B cell (primary cell): ENCODE measurements at regions of chr19 and their contacts with region 1.

Region 1: DNA sequence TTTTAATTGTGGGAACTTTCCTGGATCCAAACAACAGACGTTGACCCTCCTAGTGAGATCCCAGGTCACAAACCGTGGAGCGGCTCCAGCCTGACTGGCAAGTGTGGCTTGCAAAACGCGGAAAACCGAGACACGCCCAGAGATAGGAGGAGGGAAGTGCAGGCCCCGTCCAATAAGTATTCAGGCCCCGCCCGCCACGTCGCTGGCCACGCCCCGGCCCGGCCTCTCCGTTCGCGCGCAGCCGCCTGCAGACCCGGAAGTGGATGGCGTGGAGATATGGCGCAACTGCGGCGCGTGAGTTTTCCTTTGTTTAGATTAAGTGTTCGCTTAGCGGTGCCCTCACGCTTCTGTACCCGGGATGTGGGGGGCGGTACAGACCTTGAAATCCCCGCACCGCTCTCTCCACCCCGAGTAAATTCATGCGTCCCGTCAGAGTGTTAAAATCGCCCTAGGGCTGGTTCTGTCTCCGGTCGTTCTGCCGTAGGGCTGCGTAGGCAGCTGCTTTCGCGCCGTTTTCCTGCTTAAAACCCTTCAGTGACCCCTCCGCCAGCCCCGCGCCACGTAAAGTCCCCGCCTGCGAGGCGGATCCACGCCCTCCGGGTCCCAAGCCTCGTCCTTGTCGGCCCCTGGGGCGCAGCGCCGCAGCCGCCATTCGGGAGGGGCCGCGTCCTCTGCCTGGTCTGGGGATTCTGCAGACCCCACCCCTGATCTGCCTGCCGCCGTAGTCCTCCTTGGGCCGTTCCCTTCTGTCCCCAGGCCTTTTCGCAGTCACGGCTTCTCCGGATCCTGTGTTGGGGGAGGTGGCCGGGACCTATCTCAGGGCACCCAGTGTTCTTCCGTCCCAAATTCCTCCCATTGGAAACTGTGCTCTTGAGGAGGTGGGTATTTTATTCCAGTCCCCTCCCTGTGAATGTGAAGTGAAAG is at the start of gene ZNF766:
- DNase-seq: peak; percentile 96
- ATAC-seq: peak; percentile 99
- H3K4me3 ChIP-seq: peak within 1 kb of the TSS; percentile 83 to 100 (median 96)
- H3K4me3 Mint-ChIP-seq: peak within 1 kb of the TSS; percentile 95
- H3K27ac ChIP-seq: peak within 1 kb of the TSS; percentile 87 to 97
- H3K27ac Mint-ChIP-seq: peak within 1 kb of the TSS; percentile 96
- H3K4me1 ChIP-seq: peaks cover 12 to 21% of the 10 kb centered on the region in 2 donors
- H3K4me1 Mint-ChIP-seq: peaks cover 40% of the 10 kb centered on the region
- H3K27me3 ChIP-seq: no peaks in the 10 kb centered on the region
- H3K27me3 Mint-ChIP-seq: no peaks in the 10 kb centered on the region
- CTCF ChIP-seq: no peak
- total RNA-seq, gene ZNF766: 41.1 and 48.3 TPM in 2 replicates

Region 2: GRCh38 chr19:52171321-52172169 is 98.1 kb before region 1 on chr19 and contains the start of gene ZNF836:
- CTCF ChIA-PET with region 1: no interaction called
- POLR2A ChIA-PET with region 1: no interaction called
- intact Hi-C with region 1: loop called (anchors 1 kb)
- DNase-seq: peak; percentile 92
- ATAC-seq: peak; percentile 98
- H3K4me3 ChIP-seq: peak within 1 kb of the TSS; percentile 71 to 100 (median 82)
- H3K4me3 Mint-ChIP-seq: peak within 1 kb of the TSS; percentile 98
- H3K27ac ChIP-seq: peak within 1 kb of the TSS; percentile 66 to 90
- H3K27ac Mint-ChIP-seq: peak within 1 kb of the TSS; percentile 97
- H3K4me1 ChIP-seq: peaks cover 17 to 20% of the 10 kb centered on the region in 2 donors
- H3K4me1 Mint-ChIP-seq: peaks cover 35% of the 10 kb centered on the region
- H3K27me3 ChIP-seq: no peaks in the 10 kb centered on the region
- H3K27me3 Mint-ChIP-seq: no peaks in the 10 kb centered on the region
- CTCF ChIP-seq: no peak
- total RNA-seq, gene ZNF836: 42.0 and 46.4 TPM in 2 replicates

Region 3: GRCh38 chr19:52296773-52297600 is 27.4 kb after region 1 on chr19 and contains the start of gene ZNF480:
- CTCF ChIA-PET with region 1: no interaction called
- POLR2A ChIA-PET with region 1: no interaction called
- intact Hi-C with region 1: loop called (anchors 1 kb)
- DNase-seq: peak; percentile 91
- ATAC-seq: peak; percentile 77
- H3K4me3 ChIP-seq: peak within 1 kb of the TSS; percentile 93 to 98 (median 98)
- H3K4me3 Mint-ChIP-seq: peak within 1 kb of the TSS; percentile 96
- H3K27ac ChIP-seq: peak within 1 kb of the TSS; percentile 94 to 96
- H3K27ac Mint-ChIP-seq: peak within 1 kb of the TSS; percentile 98
- H3K4me1 ChIP-seq: peaks cover 11 to 16% of the 10 kb centered on the region in 2 donors
- H3K4me1 Mint-ChIP-seq: peaks cover 21% of the 10 kb centered on the region
- H3K27me3 ChIP-seq: no peaks in the 10 kb centered on the region
- H3K27me3 Mint-ChIP-seq: no peaks in the 10 kb centered on the region
- CTCF ChIP-seq: no peak
- total RNA-seq, gene ZNF480: 21.8 and 24.8 TPM in 2 replicates

Region 4: DNA sequence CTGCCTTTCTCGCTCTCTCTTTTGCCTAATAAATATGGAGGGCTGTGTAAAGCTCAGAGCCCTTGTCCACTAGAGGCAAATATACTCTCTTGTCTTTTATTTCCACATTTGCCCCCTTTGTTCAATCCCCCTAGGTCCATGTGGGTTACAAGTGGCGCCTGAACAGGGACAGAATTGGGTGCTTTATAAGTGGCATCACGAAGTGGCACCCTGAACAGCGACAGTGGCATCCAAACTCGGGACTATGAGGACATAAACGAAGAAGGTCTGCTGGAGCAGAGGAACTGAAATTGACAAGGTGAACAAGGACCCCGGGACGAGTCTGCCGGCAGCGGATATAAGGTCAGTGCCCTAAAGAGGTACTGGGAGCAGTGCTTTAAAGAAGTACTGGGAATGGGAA is 62.2 kb after region 1 on chr19:
- CTCF ChIA-PET with region 1: no interaction called
- POLR2A ChIA-PET with region 1: no interaction called
- intact Hi-C with region 1: no loop called
- DNase-seq: peak; percentile 23
- ATAC-seq: no peak
- H3K4me3 ChIP-seq: no peak overlapping the region
- H3K4me3 Mint-ChIP-seq: no peak overlapping the region
- H3K27ac ChIP-seq: no peak overlapping the region
- H3K27ac Mint-ChIP-seq: no peak overlapping the region
- H3K4me1 ChIP-seq: peaks cover 1 to 10% of the 10 kb centered on the region in 2 donors
- H3K4me1 Mint-ChIP-seq: peaks cover 7% of the 10 kb centered on the region
- H3K27me3 ChIP-seq: no peaks in the 10 kb centered on the region
- H3K27me3 Mint-ChIP-seq: no peaks in the 10 kb centered on the region
- CTCF ChIP-seq: no peak

Region 5: GRCh38 chr19:52507266-52507665 is 237.7 kb after region 1 on chr19:
- CTCF ChIA-PET with region 1: no interaction called
- POLR2A ChIA-PET with region 1: no interaction called
- intact Hi-C with region 1: no loop called
- DNase-seq: no peak
- ATAC-seq: no peak
- H3K4me3 ChIP-seq: no peak overlapping the region
- H3K4me3 Mint-ChIP-seq: no peak overlapping the region
- H3K27ac ChIP-seq: no peak overlapping the region
- H3K27ac Mint-ChIP-seq: no peak overlapping the region
- H3K4me1 ChIP-seq: no peaks in the 10 kb centered on the region
- H3K4me1 Mint-ChIP-seq: no peaks in the 10 kb centered on the region
- H3K27me3 ChIP-seq: no peaks in the 10 kb centered on the region
- H3K27me3 Mint-ChIP-seq: no peaks in the 10 kb centered on the region
- CTCF ChIP-seq: no peak

Region 6: GRCh38 chr19:52535771-52536447 is 266.3 kb after region 1 on chr19:
- CTCF ChIA-PET with region 1: no interaction called
- POLR2A ChIA-PET with region 1: no interaction called
- intact Hi-C with region 1: no loop called
- DNase-seq: peak; percentile 90
- ATAC-seq: peak; percentile 99
- H3K4me3 ChIP-seq: peak overlapping the region; percentile 71 to 86 (median 76)
- H3K4me3 Mint-ChIP-seq: peak overlapping the region; percentile 95
- H3K27ac ChIP-seq: peak overlapping the region; percentile 45 to 77
- H3K27ac Mint-ChIP-seq: peak overlapping the region; percentile 90
- H3K4me1 ChIP-seq: peaks cover 2 to 18% of the 10 kb centered on the region in 2 donors
- H3K4me1 Mint-ChIP-seq: peaks cover 31% of the 10 kb centered on the region
- H3K27me3 ChIP-seq: no peaks in the 10 kb centered on the region
- H3K27me3 Mint-ChIP-seq: no peaks in the 10 kb centered on the region
- CTCF ChIP-seq: peak; percentile 29

Region 7: GRCh38 chr19:52570000-52570861 is 300.6 kb after region 1 on chr19 and contains the start of gene ZNF701:
- CTCF ChIA-PET with region 1: no interaction called
- POLR2A ChIA-PET with region 1: no interaction called
- intact Hi-C with region 1: loop called (anchors 1 kb)
- DNase-seq: peak; percentile 96
- ATAC-seq: peak; percentile 99
- H3K4me3 ChIP-seq: peak within 1 kb of the TSS; percentile 84 to 98 (median 98)
- H3K4me3 Mint-ChIP-seq: peak within 1 kb of the TSS; percentile 87
- H3K27ac ChIP-seq: peak within 1 kb of the TSS; percentile 77 to 87
- H3K27ac Mint-ChIP-seq: peak within 1 kb of the TSS; percentile 82
- H3K4me1 ChIP-seq: peaks cover 11 to 14% of the 10 kb centered on the region in 2 donors
- H3K4me1 Mint-ChIP-seq: peaks cover 33% of the 10 kb centered on the region
- H3K27me3 ChIP-seq: no peaks in the 10 kb centered on the region
- H3K27me3 Mint-ChIP-seq: no peaks in the 10 kb centered on the region
- CTCF ChIP-seq: peak; percentile 45
- total RNA-seq, gene ZNF701: 48.8 and 49.2 TPM in 2 replicates

Region 8: GRCh38 chr19:52690369-52691214 is 421.0 kb after region 1 on chr19:
- CTCF ChIA-PET with region 1: no interaction called
- POLR2A ChIA-PET with region 1: no interaction called
- intact Hi-C with region 1: loop called (anchors 1 kb)
- DNase-seq: peak; percentile 92
- ATAC-seq: peak; percentile 97
- H3K4me3 ChIP-seq: peak overlapping the region; percentile 76 to 91 (median 80)
- H3K4me3 Mint-ChIP-seq: peak overlapping the region; percentile 97
- H3K27ac ChIP-seq: peak overlapping the region; percentile 55 to 72
- H3K27ac Mint-ChIP-seq: peak overlapping the region; percentile 87
- H3K4me1 ChIP-seq: peaks cover 12 to 15% of the 10 kb centered on the region in 2 donors
- H3K4me1 Mint-ChIP-seq: peaks cover 26% of the 10 kb centered on the region
- H3K27me3 ChIP-seq: no peaks in the 10 kb centered on the region
- H3K27me3 Mint-ChIP-seq: no peaks in the 10 kb centered on the region
- CTCF ChIP-seq: no peak